Activated CD4-positive, alpha-beta memory T cell treated with anti-CD3 and anti-CD28 coated beads for 36 hours (primary cell): ENCODE measurements at regions of chr7 and their contacts with region 1.

Region 1: GRCh38 chr7:37065779-37066271 is 341.5 kb upstream of the AOAH start:
- DNase-seq: peak; percentile 68
- H3K4me3 Mint-ChIP-seq: no peak overlapping the region
- H3K27ac Mint-ChIP-seq: peak overlapping the region; percentile 74
- H3K4me1 Mint-ChIP-seq: peaks cover 70% of the 10 kb centered on the region
- H3K27me3 Mint-ChIP-seq: no peaks in the 10 kb centered on the region

Region 2: DNA sequence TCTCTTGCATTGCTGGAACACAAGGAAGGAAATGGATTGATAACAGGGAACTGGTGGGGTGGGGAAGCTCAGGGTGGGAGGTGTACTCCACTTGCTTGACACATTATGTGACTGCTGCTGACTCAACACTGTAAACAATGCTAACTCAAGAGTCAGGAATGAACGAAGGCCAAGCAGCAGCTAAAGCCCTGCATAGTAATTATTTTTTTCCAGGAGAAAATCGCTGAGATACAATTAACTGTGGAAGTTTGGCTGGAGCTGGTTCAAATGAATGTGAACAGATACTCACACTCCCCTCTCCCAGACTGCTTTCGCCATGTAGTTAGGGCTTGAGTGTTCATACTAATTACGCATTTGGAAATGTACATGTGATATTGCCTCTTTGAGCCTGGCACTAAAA is 170.6 kb before region 1 on chr7:
- CTCF ChIA-PET with region 1: no interaction called
- POLR2A ChIA-PET with region 1: no interaction called
- intact Hi-C with region 1: no loop called
- DNase-seq: no peak
- H3K4me3 Mint-ChIP-seq: no peak overlapping the region
- H3K27ac Mint-ChIP-seq: no peak overlapping the region
- H3K4me1 Mint-ChIP-seq: peaks cover 15% of the 10 kb centered on the region
- H3K27me3 Mint-ChIP-seq: no peaks in the 10 kb centered on the region

Region 3: DNA sequence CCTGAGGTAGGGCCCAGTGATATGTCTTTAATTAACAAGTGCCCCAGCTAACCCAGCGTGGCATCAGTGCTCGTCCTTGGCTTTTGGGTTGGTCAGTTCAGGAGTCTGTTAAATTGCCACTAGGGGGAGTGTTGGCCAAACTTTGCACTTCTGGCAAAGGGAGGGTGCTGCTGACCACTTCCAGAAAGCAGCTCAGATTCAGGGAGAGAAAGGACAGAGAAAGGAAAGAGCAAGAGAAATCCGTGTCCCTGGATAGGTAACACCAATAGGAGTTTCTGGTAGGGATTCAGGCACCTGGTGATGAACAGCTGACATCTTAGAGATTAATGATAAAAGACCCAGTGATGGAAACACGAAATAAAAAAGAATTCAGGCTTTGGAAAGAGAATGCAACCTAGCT is 98.4 kb before region 1 on chr7:
- CTCF ChIA-PET with region 1: no interaction called
- POLR2A ChIA-PET with region 1: no interaction called
- intact Hi-C with region 1: loop called (anchors 5 kb)
- DNase-seq: no peak
- H3K4me3 Mint-ChIP-seq: no peak overlapping the region
- H3K27ac Mint-ChIP-seq: no peak overlapping the region
- H3K4me1 Mint-ChIP-seq: peaks cover 53% of the 10 kb centered on the region
- H3K27me3 Mint-ChIP-seq: no peaks in the 10 kb centered on the region

Region 4: GRCh38 chr7:37031571-37032257 is 34.1 kb before region 1 on chr7:
- CTCF ChIA-PET with region 1: no interaction called
- POLR2A ChIA-PET with region 1: no interaction called
- intact Hi-C with region 1: loop called (anchors 1 kb)
- DNase-seq: peak; percentile 68
- H3K4me3 Mint-ChIP-seq: no peak overlapping the region
- H3K27ac Mint-ChIP-seq: peak overlapping the region; percentile 49
- H3K4me1 Mint-ChIP-seq: peaks cover 57% of the 10 kb centered on the region
- H3K27me3 Mint-ChIP-seq: no peaks in the 10 kb centered on the region

Region 5: GRCh38 chr7:37052705-37053104 is 13.1 kb before region 1 on chr7:
- CTCF ChIA-PET with region 1: no interaction called
- POLR2A ChIA-PET with region 1: no interaction called
- intact Hi-C with region 1: no loop called
- DNase-seq: peak; percentile 35
- H3K4me3 Mint-ChIP-seq: no peak overlapping the region
- H3K27ac Mint-ChIP-seq: no peak overlapping the region
- H3K4me1 Mint-ChIP-seq: peaks cover 7% of the 10 kb centered on the region
- H3K27me3 Mint-ChIP-seq: no peaks in the 10 kb centered on the region

Region 6: GRCh38 chr7:37109843-37110242 is 44.0 kb after region 1 on chr7:
- CTCF ChIA-PET with region 1: no interaction called
- POLR2A ChIA-PET with region 1: no interaction called
- intact Hi-C with region 1: loop called (anchors 5 kb)
- DNase-seq: no peak
- H3K4me3 Mint-ChIP-seq: no peak overlapping the region
- H3K27ac Mint-ChIP-seq: no peak overlapping the region
- H3K4me1 Mint-ChIP-seq: peaks cover 46% of the 10 kb centered on the region
- H3K27me3 Mint-ChIP-seq: no peaks in the 10 kb centered on the region

Region 7: DNA sequence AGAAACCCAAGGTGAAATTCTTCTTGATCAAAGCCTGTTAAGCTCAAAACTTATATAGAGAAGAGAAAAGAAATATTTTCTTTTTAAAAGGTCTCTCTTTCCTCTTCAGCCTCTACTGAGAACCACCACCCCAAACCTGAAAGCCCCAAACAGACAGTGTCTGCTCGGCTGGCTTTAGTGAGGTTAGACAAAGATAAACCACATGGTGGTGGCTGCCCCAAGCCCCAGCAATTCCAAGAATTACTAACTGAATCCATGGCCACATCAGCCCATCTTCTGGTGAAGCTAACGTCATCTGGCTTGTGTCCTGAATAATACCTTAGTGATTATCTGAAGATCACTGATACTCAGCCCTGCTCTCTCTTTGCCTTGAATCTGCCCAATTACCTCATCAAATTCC is 107.8 kb after region 1 on chr7:
- CTCF ChIA-PET with region 1: no interaction called
- POLR2A ChIA-PET with region 1: no interaction called
- intact Hi-C with region 1: no loop called
- DNase-seq: no peak
- H3K4me3 Mint-ChIP-seq: no peak overlapping the region
- H3K27ac Mint-ChIP-seq: no peak overlapping the region
- H3K4me1 Mint-ChIP-seq: peaks cover 2% of the 10 kb centered on the region
- H3K27me3 Mint-ChIP-seq: no peaks in the 10 kb centered on the region